ENCODE measurements at regions of chr3 and their contacts with region 1.

Region 1: DNA sequence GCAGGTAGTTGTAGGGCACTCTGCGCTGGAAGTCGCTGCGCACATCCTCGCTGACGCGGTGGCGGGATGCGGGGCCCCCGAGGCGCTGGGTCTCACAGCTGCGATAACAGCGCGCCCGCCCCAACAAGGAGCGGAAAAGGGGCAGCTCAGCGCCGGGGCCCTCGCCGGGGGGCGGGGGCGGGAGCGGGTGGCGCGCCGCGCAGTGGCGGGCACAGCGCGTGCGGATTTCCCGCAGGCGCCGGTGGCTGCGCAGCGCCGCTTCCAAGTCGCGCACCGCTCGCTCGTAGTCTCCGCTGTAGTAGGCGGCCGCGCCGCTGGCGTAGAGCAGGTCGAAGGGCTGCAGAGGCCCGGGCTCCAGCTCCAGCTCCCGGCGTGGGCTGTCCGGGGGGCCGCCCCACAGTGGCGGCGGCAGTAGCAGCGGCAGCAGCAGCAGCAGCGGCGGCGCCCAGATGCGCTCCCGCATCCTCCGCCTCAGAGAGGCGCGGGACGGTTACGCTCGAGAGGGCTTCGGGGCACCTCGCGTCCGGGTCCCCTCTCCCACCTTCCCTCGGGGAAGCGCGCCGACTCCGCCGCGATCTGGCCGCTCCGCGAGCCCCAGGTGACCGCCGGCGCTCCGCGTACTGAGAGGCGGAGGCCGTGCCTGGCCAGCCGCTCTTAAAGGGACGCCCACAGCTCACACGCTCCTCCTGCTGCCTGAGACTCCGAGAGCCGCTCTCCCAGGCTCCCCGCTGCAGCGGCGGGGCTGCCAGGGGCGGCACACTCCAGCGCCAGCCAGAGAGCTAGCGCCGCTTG is at the start of gene P3H2:
- DNase-seq: peak; percentile 77
- CTCF ChIP-seq: peak; percentile 46

Region 2: GRCh38 chr3:190012314-190012782 is 108.1 kb before region 1 on chr3:
- CTCF ChIA-PET with region 1: no interaction called
- POLR2A ChIA-PET with region 1: no interaction called
- DNase-seq: no peak
- CTCF ChIP-seq: no peak

Region 3: GRCh38 chr3:190092250-190092649 is 28.2 kb before region 1 on chr3:
- CTCF ChIA-PET with region 1: interaction called, 13 read pairs
- POLR2A ChIA-PET with region 1: no interaction called
- DNase-seq: no peak
- CTCF ChIP-seq: no peak

Region 4: DNA sequence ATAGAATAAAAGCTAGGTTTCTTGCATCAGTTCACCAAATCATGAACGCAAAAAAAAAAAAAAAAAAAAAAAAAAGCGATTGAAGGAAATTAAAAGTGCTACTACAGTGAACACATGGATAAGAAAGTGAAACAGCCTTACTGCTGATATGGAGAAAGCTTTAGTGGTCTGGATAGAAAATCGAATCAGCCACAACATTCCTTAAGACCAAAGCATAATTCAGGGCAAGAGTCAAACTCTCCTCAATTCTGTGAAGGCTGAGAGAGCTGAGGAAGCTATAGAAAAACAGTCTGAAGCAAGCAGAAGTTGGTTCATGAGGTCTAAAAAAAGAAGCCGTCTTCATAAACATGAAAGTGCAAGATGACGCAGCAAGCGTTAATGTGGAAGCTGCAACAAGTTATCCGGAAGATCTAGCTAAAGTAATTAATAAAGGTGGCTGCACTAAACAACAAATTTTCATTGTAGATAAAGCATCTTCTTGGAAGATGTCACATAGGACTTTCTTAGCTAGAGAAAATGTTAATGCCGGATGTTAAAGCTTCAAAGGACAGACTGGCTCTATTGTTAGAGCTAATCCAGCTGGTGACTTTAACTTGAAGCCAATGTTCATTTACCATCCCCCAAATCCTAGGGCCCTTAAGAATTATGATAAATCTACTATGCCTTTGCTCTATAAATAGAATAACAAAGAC is 19.0 kb before region 1 on chr3:
- CTCF ChIA-PET with region 1: interaction called, 11 read pairs
- POLR2A ChIA-PET with region 1: interaction called, 6 read pairs
- DNase-seq: no peak
- CTCF ChIP-seq: no peak

Region 5: GRCh38 chr3:190109441-190109840 is 11.0 kb before region 1 on chr3:
- CTCF ChIA-PET with region 1: interaction called, 12 read pairs
- POLR2A ChIA-PET with region 1: interaction called, 5 read pairs
- DNase-seq: no peak
- CTCF ChIP-seq: no peak

Measured in GM10248 (cell line).